ENCODE measurements at regions of chr6 and their contacts with region 1.

Region 1: GRCh38 chr6:25138237-25139125 is 140.7 kb upstream of the CARMIL1 start:
- DNase-seq: no peak

Region 2: GRCh38 chr6:25156096-25156495 is 17.6 kb after region 1 on chr6:
- intact Hi-C with region 1: no loop called
- DNase-seq: no peak

Region 3: GRCh38 chr6:25179051-25179778 is 40.7 kb after region 1 on chr6:
- intact Hi-C with region 1: loop called in 1 of 2 experiments (anchors 5 kb)
- DNase-seq: no peak

Measured in posterior vena cava (tissue), 2 donors.